GM10248 (cell line): ENCODE measurements at regions of chr17 and their contacts with region 1.

Region 1: GRCh38 chr17:38667099-38667786 is 7.5 kb downstream of the EPOP start:
- DNase-seq: peak; percentile 79
- CTCF ChIP-seq: peak; percentile 100

Region 2: GRCh38 chr17:38421171-38421841 is 245.9 kb before region 1 on chr17:
- CTCF ChIA-PET with region 1: interaction called, 13 read pairs
- POLR2A ChIA-PET with region 1: no interaction called
- DNase-seq: no peak
- CTCF ChIP-seq: no peak

Region 3: GRCh38 chr17:38485146-38485468 is 182.1 kb before region 1 on chr17:
- CTCF ChIA-PET with region 1: interaction called, 18 read pairs
- POLR2A ChIA-PET with region 1: no interaction called
- DNase-seq: no peak
- CTCF ChIP-seq: no peak

Region 4: GRCh38 chr17:38584350-38584925 is 82.8 kb before region 1 on chr17:
- CTCF ChIA-PET with region 1: interaction called, 92 read pairs
- POLR2A ChIA-PET with region 1: no interaction called
- DNase-seq: peak; percentile 84
- CTCF ChIP-seq: peak; percentile 85

Region 5: DNA sequence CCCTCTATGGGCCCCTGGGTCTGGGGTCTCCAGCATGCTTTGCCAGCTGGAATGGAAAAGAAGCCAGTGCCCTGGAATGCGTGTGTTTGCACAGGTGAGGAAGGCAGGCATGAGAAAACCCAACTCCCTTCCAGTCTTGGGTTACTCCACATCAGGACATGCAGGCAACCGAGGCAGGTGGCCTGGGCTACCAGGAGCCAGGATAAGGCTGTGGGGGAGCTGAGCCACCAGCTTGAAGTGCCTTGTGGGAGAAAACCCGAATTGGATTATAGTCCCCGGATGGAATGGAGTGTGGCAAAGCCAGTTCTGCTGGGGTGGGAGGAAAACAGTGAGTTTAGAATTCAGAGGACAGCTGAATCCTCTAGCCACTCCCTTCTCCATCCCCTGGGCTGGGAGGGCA is 68.7 kb before region 1 on chr17:
- CTCF ChIA-PET with region 1: interaction called, 19 read pairs
- POLR2A ChIA-PET with region 1: no interaction called
- DNase-seq: peak; percentile 58
- CTCF ChIP-seq: no peak

Region 6: GRCh38 chr17:38605888-38606645 is 61.2 kb before region 1 on chr17 and contains the start of gene SRCIN1:
- CTCF ChIA-PET with region 1: interaction called, 19 read pairs
- POLR2A ChIA-PET with region 1: no interaction called
- DNase-seq: peak; percentile 79
- CTCF ChIP-seq: peak; percentile 99

Region 7: DNA sequence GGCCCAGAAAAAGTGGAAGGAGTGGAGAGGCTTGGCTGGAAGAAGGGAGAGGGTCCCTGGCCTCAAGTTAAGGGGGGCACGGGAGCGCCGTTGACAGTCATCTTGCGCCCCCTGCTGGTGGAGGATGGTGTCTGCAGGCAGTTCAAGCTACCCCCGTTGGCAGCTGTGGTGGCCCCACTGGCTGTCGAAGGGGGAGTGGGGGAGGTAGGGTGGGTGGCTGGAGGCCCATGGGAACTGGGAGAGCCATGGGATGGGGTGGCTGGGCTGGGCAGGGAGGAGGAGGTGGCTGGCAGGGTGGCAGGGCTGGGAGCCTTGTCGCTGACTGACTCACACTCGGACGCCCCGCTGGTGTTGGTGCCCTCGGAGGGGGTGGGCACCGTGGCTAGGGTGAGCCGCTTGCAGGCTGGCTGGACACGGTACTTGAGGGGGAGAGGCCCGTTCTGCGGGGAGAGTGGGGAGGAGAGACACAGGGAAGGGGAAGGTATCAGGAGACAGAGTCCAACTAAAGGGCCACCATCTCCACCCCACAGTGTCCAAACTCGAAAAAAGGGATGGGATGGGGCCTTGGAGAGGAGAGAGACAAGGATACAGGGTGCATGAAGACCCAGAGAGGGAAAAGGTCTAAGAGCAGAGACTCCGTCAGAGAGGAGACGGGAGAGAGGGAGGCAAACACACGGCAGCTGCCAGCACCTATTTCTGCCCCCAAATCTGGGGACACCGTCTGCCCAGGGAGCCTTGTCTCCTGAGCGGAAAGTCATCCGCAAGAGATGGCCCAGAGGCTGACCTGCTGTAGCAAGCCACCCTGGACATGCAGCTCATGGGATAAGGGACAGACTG is 68.1 kb after region 1 on chr17:
- CTCF ChIA-PET with region 1: interaction called, 31 read pairs
- POLR2A ChIA-PET with region 1: no interaction called
- DNase-seq: peak; percentile 87
- CTCF ChIP-seq: peak; percentile 94